ENCODE measurements at regions of chr5 and their contacts with region 1.

Region 1: GRCh38 chr5:37412515-37413277 is 33.6 kb downstream of the WDR70 start:
- H3K4me3 Mint-ChIP-seq: no peak overlapping the region
- H3K27ac Mint-ChIP-seq: no peak overlapping the region
- H3K4me1 Mint-ChIP-seq: no peaks in the 10 kb centered on the region
- H3K27me3 Mint-ChIP-seq: no peaks in the 10 kb centered on the region

Region 2: DNA sequence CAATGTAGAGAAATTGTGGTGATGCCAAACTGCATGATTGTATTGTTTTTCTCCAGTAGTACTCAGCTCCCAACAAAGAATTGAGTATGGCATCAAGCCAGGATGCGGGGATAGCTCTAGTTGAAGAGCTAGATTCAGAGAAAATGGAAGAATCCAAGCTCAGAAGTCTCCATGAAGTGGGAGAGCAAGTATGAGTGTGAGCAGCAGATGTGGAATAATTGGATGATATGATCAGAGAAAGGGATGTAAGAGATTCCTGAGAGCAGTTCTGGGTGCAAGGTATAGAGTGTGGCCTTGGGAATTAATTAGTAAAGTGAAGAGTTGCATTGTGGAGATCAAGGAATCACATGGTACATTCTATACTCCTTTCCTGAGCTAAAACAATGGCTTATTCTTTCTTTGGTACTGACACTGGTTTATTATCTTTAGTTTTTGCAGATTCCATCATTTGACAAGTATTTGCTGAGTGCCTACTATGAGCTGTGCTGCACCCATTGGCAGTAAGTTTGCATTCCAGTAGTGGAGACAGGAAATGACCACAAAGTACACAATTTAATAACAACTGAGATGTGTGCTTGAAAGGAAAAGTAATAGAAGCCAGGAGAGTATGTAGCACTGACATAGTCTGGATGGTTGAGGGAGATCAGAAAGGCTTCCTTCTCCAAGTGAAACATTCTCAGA is 340.7 kb before region 1 on chr5:
- intact Hi-C with region 1: no loop called
- H3K4me3 Mint-ChIP-seq: no peak overlapping the region
- H3K27ac Mint-ChIP-seq: no peak overlapping the region
- H3K4me1 Mint-ChIP-seq: no peaks in the 10 kb centered on the region
- H3K27me3 Mint-ChIP-seq: no peaks in the 10 kb centered on the region

Region 3: GRCh38 chr5:37448941-37449340 is 36.2 kb after region 1 on chr5:
- intact Hi-C with region 1: no loop called
- H3K4me3 Mint-ChIP-seq: no peak overlapping the region
- H3K27ac Mint-ChIP-seq: no peak overlapping the region
- H3K4me1 Mint-ChIP-seq: peaks cover 17% of the 10 kb centered on the region
- H3K27me3 Mint-ChIP-seq: no peaks in the 10 kb centered on the region

Region 4: GRCh38 chr5:37554938-37555337 is 142.2 kb after region 1 on chr5:
- intact Hi-C with region 1: loop called (anchors 10 kb)
- H3K4me3 Mint-ChIP-seq: no peak overlapping the region
- H3K27ac Mint-ChIP-seq: no peak overlapping the region
- H3K4me1 Mint-ChIP-seq: peaks cover 12% of the 10 kb centered on the region
- H3K27me3 Mint-ChIP-seq: no peaks in the 10 kb centered on the region

Region 5: GRCh38 chr5:38193015-38193581 is 780.4 kb after region 1 on chr5:
- intact Hi-C with region 1: loop called (anchors 5 kb)
- H3K4me3 Mint-ChIP-seq: no peak overlapping the region
- H3K27ac Mint-ChIP-seq: no peak overlapping the region
- H3K4me1 Mint-ChIP-seq: no peaks in the 10 kb centered on the region
- H3K27me3 Mint-ChIP-seq: peaks cover 23% of the 10 kb centered on the region

Measured in dendritic cell treated with granulocyte-macrophage colony-stimulating factor and Interleukin-4, amounts not matched to agents 40 ng/mL and 50 ng/mL, for 4 days (primary cell).